ENCODE measurements at regions of chr17 and their contacts with region 1.

Region 1: DNA sequence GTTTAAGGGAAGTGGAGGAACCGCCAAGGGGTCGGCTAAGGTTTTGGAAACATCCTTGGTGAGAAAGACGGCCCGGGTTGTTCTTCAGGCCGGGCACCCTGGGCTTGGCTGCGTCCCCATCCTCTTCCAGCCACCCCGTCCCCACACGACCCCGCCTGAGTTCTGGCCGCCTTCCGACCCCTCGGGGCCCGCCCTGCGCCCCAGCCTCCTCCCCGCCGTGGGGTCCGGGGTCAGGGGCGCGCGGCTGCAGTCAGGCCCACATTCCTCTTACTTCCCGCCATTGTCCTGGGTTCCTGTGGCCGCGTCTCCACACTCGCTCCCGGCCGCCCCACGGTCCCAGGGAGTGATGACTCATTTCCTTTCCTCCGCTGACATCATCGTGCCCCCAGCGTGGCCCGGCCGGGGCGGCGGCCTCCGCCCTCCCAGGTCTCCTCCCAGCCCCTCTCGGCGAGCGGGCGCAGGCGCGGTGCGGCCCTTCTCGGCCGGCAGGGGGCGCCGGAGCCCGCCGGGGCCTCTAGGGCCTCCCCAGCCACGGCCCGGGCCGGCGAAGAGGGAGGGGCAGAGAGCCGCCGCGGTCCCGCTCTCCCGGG is 59.6 kb downstream of the WSB1 start:
- DNase-seq: peak; percentile 85
- H3K4me3 ChIP-seq: peak overlapping the region; percentile 84
- H3K27ac ChIP-seq: peak overlapping the region; percentile 8
- H3K4me1 ChIP-seq: peaks cover 17% of the 10 kb centered on the region
- CTCF ChIP-seq: peak; percentile 88

Region 2: DNA sequence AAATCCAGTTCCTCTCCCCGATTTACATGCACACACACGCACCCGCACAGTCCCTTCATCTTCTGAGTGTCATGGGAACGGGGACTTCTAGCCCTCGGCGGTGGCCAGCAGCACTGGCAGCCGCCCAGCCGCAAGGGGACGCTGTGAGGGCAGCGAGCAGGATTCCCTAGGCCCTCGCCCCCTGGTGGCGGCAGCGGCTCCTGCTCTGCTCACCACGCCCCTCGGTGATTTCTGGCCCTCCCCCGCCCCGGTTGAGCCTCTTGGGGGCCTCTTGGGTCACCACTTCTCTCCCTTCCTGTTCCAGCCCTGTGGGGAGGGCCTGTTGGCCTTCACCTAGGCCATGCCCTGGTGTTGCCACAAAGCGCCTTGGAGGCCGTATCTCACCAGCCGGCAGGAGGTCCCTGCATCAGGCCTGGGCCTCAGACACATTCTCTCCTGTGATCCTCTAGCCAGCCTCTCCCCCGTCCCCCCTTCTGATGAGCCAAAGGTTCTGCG is 27.5 kb after region 1 on chr17:
- CTCF ChIA-PET with region 1: no interaction called
- POLR2A ChIA-PET with region 1: no interaction called
- intact Hi-C with region 1: loop called (anchors 2 kb)
- DNase-seq: peak; percentile 70
- H3K4me3 ChIP-seq: no peak overlapping the region
- H3K27ac ChIP-seq: no peak overlapping the region
- H3K4me1 ChIP-seq: no peaks in the 10 kb centered on the region
- CTCF ChIP-seq: peak; percentile 88

Region 3: DNA sequence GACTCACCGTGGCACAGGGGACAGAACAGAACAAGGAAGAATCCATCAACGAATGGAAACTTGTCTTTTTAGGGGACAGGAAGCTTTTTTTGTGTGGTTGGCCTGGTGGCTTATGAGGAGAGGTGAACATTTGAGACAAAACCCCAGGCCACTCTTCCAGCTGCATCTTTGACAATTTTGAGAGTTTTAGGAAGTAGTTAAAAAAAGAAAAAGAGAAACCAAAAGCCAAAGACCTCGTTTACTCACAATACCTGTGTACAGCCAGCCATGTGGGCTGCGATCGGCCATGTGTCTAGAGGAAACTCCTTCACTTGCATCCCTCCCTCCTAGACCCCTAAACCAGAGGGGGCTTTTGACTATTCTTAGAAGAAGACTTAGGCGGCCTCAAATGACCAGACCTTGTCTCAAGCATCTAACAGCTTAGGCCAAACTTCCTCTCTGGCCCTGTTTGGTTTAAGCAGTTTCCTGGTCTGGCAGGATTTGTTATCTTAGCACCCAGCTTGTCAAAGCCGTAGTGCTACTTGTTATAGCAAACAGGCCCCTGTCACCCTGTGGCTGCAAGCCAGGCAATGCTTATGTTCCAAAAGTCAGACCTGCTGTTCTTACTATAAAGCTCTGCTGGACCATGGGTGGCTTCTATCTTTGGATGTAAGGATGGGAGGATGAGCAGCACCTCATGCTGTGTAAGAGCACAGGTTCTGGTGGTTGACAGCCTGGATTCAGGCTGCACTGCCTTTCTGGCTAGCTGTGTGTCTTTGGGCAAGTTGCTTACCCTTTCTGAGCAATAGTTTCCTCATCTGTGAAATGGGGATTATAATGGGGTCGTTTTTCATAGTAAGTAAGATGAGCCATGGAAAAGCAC is 120.4 kb after region 1 on chr17:
- CTCF ChIA-PET with region 1: no interaction called
- POLR2A ChIA-PET with region 1: no interaction called
- intact Hi-C with region 1: no loop called
- DNase-seq: peak; percentile 52
- H3K4me3 ChIP-seq: peak overlapping the region; percentile 19
- H3K27ac ChIP-seq: peak overlapping the region; percentile 41
- H3K4me1 ChIP-seq: peaks cover 15% of the 10 kb centered on the region
- CTCF ChIP-seq: no peak

Measured in OCI-LY7 (cell line).